PC-3 (cell line): ENCODE measurements at regions of chr12 and their contacts with region 1.

Region 1: DNA sequence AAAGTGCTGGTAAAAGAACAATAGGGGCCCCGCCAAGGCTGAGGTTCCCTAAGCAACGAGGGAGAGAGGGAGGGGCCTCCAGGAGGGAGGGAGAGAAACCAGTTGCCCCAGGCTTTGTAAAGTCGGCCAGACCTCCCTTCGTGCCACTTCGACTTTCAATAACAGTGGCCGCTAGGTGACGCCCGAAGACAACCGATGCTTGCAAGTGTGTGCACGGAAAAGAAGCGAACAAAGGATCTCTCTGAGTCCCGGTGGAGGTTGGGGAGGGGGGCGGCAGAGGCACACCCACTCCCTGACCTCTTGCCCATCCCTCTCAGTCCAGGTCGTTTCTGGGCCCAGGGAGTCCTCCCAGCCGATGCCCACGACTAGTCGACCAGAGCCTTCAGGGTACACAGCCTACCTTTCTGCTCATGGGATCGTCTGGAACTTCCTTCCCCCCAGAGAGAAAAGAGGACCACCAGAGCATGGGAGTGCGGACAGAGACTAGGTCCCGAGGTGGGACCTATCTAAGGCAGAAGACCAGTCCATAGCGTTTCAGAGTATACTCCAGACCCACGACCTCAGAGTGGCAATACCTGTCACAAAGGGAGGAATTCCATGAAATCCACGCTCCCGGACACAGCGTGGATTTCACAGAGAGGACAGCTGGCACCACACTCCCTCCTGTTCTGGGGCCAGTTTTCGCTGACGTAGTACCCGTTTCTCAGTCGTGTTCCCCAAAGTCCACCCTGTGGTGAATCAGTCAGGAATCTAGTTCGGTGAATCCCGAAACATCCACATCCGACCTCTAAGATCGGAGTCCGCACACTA is 262.7 kb upstream of the ALG10B start:
- DNase-seq: peak; percentile 97
- ATAC-seq: peak; percentile 45
- H3K4me3 ChIP-seq: peak overlapping the region; percentile 61
- H3K27ac ChIP-seq: no peak overlapping the region
- H3K4me1 ChIP-seq: peaks cover 28% of the 10 kb centered on the region
- H3K27me3 ChIP-seq: no peaks in the 10 kb centered on the region
- CTCF ChIP-seq: peak; percentile 93

Region 2: DNA sequence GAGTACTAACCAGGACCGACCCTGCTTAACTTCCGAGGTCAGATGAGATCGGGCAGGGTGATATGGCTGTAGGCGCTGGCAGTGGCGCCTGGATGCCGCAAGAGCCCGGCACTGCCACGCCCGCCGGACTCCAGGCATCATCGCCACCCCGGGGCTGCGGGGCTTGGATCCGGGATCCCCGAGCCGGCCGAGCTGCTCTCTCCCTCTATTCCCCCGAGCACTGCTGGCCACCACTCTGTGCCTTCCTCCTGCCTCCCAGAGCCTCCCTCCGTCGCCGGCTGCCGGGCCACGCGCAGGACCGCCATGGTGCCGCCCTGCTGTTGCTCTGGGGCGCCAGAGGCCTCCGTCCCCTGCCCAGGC is 109.6 kb after region 1 on chr12:
- CTCF ChIA-PET with region 1: no interaction called
- POLR2A ChIA-PET with region 1: no interaction called
- intact Hi-C with region 1: no loop called
- DNase-seq: no peak
- ATAC-seq: no peak
- H3K4me3 ChIP-seq: no peak overlapping the region
- H3K27ac ChIP-seq: no peak overlapping the region
- H3K4me1 ChIP-seq: no peaks in the 10 kb centered on the region
- H3K27me3 ChIP-seq: peaks cover under 1% of the 10 kb centered on the region; the same call in 1 of the 2 replicates
- CTCF ChIP-seq: no peak

Region 3: GRCh38 chr12:38205551-38205950 is 151.7 kb after region 1 on chr12:
- CTCF ChIA-PET with region 1: no interaction called
- POLR2A ChIA-PET with region 1: no interaction called
- intact Hi-C with region 1: loop called (anchors 10 kb)
- DNase-seq: no peak
- ATAC-seq: no peak
- H3K4me3 ChIP-seq: no peak overlapping the region
- H3K27ac ChIP-seq: no peak overlapping the region
- H3K4me1 ChIP-seq: no peaks in the 10 kb centered on the region
- H3K27me3 ChIP-seq: no peaks in the 10 kb centered on the region
- CTCF ChIP-seq: no peak

Region 4: DNA sequence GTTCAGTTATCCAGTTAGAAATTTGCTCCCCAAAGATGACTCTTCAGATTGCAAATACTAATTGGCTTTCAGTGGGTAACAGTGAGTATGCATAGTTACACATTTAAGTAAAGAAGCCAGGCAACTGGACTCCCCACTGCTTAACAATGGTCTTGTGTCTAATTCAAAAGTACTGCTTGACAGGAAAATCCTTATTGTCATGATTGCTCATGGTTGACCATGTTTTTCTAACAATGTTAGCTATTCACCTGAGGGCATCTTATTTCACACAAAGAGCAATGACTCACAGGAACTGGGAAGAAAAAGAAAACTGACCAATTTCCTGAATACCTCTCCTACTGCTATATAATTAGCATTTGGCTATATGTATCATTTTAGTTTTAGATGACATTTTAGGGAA is 229.0 kb after region 1 on chr12:
- CTCF ChIA-PET with region 1: no interaction called
- POLR2A ChIA-PET with region 1: no interaction called
- intact Hi-C with region 1: loop called (anchors 10 kb)
- DNase-seq: peak; percentile 98
- ATAC-seq: peak; percentile 99
- H3K4me3 ChIP-seq: peak overlapping the region; percentile 11; the same call in 1 of the 2 replicates
- H3K27ac ChIP-seq: peak overlapping the region; percentile 91
- H3K4me1 ChIP-seq: peaks cover 25% of the 10 kb centered on the region
- H3K27me3 ChIP-seq: no peaks in the 10 kb centered on the region
- CTCF ChIP-seq: no peak

Region 5: GRCh38 chr12:38316391-38317129 is 262.7 kb after region 1 on chr12 and contains the start of gene ALG10B:
- CTCF ChIA-PET with region 1: interaction called, 6 read pairs
- POLR2A ChIA-PET with region 1: interaction called, 7 read pairs
- intact Hi-C with region 1: loop called (anchors 1 kb)
- DNase-seq: peak; percentile 97
- ATAC-seq: peak; percentile 99
- H3K4me3 ChIP-seq: peak within 1 kb of the TSS; percentile 97
- H3K27ac ChIP-seq: peak within 1 kb of the TSS; percentile 67
- H3K4me1 ChIP-seq: peaks cover 17% of the 10 kb centered on the region
- H3K27me3 ChIP-seq: no peaks in the 10 kb centered on the region
- CTCF ChIP-seq: peak; percentile 72
- total RNA-seq, gene ALG10B: 9.4 and 18.7 TPM in 2 replicates

Region 6: GRCh38 chr12:38384816-38385378 is 331.0 kb after region 1 on chr12:
- CTCF ChIA-PET with region 1: no interaction called
- POLR2A ChIA-PET with region 1: no interaction called
- intact Hi-C with region 1: loop called (anchors 10 kb)
- DNase-seq: peak; percentile 98
- ATAC-seq: peak; percentile 89
- H3K4me3 ChIP-seq: peak overlapping the region; percentile 45
- H3K27ac ChIP-seq: peak overlapping the region; percentile 96
- H3K4me1 ChIP-seq: peaks cover 48% of the 10 kb centered on the region
- H3K27me3 ChIP-seq: no peaks in the 10 kb centered on the region
- CTCF ChIP-seq: peak; percentile 72